ENCODE measurements at regions of chr15 and their contacts with region 1.

Region 1: DNA sequence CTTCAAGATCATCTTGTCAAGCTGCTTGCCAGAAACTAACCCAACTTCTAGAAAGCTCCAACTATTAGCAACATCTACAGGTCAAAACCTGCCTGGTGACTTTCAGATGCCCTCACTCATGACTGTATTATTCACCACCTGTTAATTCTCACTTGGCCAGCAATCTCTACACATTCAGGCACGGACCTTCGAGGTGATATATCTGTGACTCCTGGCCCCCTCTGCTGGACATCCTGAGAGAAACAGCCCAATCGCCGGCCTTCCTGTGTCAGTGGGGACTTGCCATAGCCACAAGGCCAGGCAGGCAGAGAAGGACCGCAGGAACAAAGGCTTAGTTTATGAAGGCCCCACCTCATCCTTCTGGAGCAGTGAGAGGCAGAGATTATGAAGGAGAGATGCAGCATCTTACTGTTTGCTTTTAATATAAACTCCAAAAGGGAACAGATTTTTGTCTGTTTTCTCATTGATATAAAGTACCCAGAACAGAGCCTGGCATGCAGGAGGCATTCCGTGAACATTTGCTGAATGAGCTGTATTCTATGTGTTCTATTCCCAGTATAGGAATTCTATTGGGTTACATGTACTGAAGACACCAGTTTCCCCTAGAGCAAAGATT is 24.4 kb upstream of the OCA2 start:
- DNase-seq: peak; percentile 25
- H3K4me3 Mint-ChIP-seq: no peak overlapping the region
- H3K27ac Mint-ChIP-seq: no peak overlapping the region
- H3K4me1 Mint-ChIP-seq: no peaks in the 10 kb centered on the region
- H3K27me3 Mint-ChIP-seq: no peaks in the 10 kb centered on the region

Region 2: DNA sequence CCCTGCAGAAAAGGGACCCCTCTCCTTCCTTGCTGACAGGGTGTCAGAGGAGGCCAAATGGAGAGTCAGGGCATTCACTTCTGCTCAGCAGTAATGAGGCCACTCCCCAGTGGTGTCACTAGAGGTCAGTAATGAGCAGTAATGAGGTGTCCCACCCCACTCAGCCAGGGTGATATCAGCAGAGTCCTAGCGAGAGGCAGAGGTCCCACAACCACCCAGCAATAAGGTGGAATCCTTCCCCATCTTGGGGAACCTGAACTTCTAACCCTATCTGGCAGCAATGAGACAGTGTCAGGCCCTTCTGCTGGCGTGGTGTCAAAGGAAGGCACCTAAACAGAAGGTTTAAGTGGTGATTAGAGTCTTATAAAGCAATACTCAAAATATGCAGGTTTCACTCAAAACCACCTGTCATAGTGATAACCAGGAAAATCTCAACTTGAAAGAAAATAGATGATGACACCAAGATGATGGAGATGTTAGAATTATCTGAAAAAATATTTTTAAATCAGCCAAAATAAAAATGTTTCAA is 37.3 kb before region 1 on chr15:
- intact Hi-C with region 1: loop called (anchors 1 kb)
- DNase-seq: peak; percentile 38
- H3K4me3 Mint-ChIP-seq: no peak overlapping the region
- H3K27ac Mint-ChIP-seq: no peak overlapping the region
- H3K4me1 Mint-ChIP-seq: peaks cover 15% of the 10 kb centered on the region
- H3K27me3 Mint-ChIP-seq: peaks cover 19% of the 10 kb centered on the region

Region 3: GRCh38 chr15:28147801-28148200 is 24.3 kb after region 1 on chr15:
- intact Hi-C with region 1: no loop called
- DNase-seq: no peak
- H3K4me3 Mint-ChIP-seq: no peak overlapping the region
- H3K27ac Mint-ChIP-seq: no peak overlapping the region
- H3K4me1 Mint-ChIP-seq: peaks cover 5% of the 10 kb centered on the region
- H3K27me3 Mint-ChIP-seq: no peaks in the 10 kb centered on the region

Region 4: DNA sequence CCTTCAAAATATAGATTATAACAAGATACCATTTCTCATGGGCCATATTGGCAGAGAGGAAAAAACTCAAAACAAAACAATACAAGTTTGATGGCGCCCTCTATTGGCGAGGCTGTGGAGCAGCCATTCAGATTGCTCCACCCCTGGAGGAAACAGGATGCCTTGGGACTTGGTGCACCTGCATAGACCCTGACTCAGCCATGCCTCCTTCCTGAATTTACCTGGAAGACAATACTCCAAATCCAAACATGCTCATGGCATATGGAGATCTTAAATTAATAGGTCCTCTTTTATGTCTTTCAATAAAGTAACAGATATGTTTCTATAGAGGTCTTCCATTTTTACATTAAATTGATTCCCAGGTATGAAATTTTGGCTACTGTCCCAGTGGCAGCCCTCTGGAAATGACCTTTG is 852.3 kb after region 1 on chr15:
- intact Hi-C with region 1: loop called (anchors 10 kb)
- DNase-seq: peak; percentile 48
- H3K4me3 Mint-ChIP-seq: no peak overlapping the region
- H3K27ac Mint-ChIP-seq: no peak overlapping the region
- H3K4me1 Mint-ChIP-seq: no peaks in the 10 kb centered on the region
- H3K27me3 Mint-ChIP-seq: peaks cover 11% of the 10 kb centered on the region